ENCODE measurements at regions of chr3 and their contacts with region 1.

Region 1: GRCh38 chr3:159988617-159989271 is at the start of gene IL12A:
- DNase-seq: peak; percentile 75
- H3K4me3 ChIP-seq: peak within 1 kb of the TSS; percentile 50
- H3K27ac ChIP-seq: no peak within 1 kb of the TSS
- H3K4me1 ChIP-seq: no peaks in the 10 kb centered on the region
- H3K27me3 ChIP-seq: no peaks in the 10 kb centered on the region
- CTCF ChIP-seq: peak; percentile 95
- total RNA-seq, gene IL12A: not detected in 2 replicates

Region 2: DNA sequence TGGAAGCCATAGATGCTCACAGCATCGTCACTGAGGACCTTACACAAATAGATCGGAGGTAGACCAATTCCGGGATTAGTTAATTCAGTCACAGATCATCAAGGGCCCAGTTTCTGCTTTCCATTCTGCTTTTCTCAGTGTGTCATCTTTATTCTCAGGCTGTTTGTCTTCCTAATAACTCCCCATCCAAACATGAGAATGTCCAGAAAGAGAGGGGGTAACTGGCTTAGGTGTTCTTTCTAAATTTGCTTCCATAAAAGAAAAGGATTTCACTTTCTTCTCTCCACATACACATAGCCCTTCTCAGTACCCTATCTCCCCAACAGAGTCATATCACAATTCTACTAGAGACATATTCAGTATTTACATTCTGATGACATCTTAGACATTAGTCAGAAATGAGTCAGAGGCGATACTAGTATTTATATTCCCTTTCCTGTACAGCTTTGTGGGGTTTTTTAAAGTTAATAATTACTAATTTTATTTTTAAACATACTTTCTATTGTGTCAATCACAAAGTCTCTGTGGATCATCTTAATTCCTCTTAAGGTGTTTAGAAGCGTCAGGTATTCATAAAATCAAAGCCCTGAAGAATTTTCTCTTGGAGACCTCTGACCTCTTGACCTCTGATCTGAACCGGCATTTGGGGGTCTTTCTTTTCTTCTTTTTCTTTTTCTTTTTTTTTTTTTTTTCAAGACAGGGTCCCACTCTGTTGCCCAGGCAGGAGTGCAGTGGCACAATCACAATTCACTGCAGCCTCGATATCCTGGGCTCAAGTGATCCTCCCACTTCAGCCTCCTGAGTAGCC is 24.4 kb before region 1 on chr3:
- CTCF ChIA-PET with region 1: interaction called, 10 read pairs
- POLR2A ChIA-PET with region 1: no interaction called
- intact Hi-C with region 1: no loop called
- DNase-seq: no peak
- H3K4me3 ChIP-seq: no peak overlapping the region
- H3K27ac ChIP-seq: no peak overlapping the region
- H3K4me1 ChIP-seq: no peaks in the 10 kb centered on the region
- H3K27me3 ChIP-seq: no peaks in the 10 kb centered on the region
- CTCF ChIP-seq: no peak